SK-N-SH (cell line): ENCODE measurements at regions of chr12 and their contacts with region 1.

Region 1: GRCh38 chr12:121048442-121048841 is 9.4 kb upstream of the OASL start:
- DNase-seq: peak; percentile 73
- H3K4me3 ChIP-seq: no peak overlapping the region
- H3K27ac ChIP-seq: peak overlapping the region in 1 of 2 experiments; percentile 75; a peak in 2 of 4 replicates
- H3K4me1 ChIP-seq: peaks cover 0 to 3% of the 10 kb centered on the region in 2 experiments; a peak in 1 of 4 replicates
- H3K27me3 ChIP-seq: no peaks in the 10 kb centered on the region; the same call in 1 of the 2 replicates
- CTCF ChIP-seq: no peak
- EP300 ChIP-seq: peak in 1 of 2 experiments; percentile 63; a peak in 2 of 4 replicates
- RAD21 ChIP-seq: no peak; the same call in 1 of the 2 replicates

Region 2: DNA sequence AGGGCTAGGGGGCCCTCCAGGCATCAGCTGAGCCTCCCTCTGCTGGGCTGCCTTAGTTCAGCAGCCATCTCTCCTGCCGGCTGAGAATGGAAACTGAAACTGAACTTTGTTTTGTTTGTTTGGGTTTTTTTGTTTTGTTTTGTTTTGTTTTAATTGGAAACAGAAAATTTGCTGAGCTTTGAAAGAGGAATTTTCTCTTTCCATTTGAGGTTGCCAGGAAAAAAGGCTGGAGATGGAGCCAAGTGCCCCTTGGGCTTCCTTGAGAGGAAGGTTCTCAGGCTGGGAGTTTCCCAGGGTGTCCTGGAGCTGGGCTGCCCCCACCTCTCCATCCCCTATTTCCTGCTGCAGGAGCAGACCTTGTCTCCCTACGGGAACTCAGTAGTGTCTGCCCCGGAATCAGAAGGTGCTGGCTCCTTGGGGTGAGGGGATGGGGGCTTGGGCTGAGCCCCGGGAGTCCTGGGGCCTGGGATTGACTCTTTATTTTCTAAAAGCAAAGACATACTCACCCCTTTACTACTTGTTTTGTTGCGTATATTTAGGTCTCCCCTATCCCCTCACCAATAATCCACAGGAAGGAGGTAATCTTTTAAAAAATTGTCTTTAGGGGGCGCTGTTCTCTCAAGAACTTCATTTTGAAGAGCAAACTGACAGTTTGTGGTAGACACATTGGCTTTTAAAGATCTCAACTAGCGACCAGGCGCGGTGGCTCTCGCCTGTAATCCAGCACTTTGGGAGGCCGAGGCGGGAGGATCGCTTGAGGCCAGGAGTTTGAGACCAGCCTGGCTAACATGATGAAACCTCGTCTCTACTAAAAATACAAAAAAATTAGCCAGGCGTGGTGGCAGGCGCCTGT is 11.9 kb after region 1 on chr12:
- CTCF ChIA-PET with region 1: interaction called, 11 read pairs
- POLR2A ChIA-PET with region 1: interaction called, 3 read pairs
- DNase-seq: peak; percentile 48
- H3K4me3 ChIP-seq: no peak overlapping the region
- H3K27ac ChIP-seq: no peak overlapping the region
- H3K4me1 ChIP-seq: peaks cover 0 to 2% of the 10 kb centered on the region in 2 experiments; a peak in 1 of 4 replicates
- H3K27me3 ChIP-seq: no peaks in the 10 kb centered on the region
- CTCF ChIP-seq: peak; percentile 70
- EP300 ChIP-seq: no peak
- RAD21 ChIP-seq: peak; percentile 60